ENCODE measurements at regions of chr5 and their contacts with region 1.

Region 1: DNA sequence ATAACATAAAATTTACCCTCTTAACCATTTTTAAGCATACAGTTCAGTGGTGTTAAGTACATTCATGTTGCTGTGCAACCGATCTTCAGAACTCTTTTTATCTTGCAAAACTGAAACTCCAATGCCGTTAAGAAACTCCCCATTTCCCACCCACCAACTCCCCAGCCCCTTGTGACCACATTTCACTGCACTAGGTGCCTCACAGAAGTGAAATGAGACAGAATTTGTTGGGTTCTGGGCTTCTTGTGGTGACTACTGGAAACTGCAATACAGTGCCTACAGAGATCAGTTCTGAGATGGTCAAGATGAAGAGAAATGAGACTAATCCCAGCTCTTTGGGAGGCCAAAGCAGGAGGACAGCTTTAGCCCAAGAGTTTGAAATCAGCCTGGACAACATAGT is 202.1 kb upstream of the SLC30A5 start:
- DNase-seq: peak; percentile 30
- H3K4me3 Mint-ChIP-seq: no peak overlapping the region
- H3K27ac Mint-ChIP-seq: peak overlapping the region; percentile 64
- H3K4me1 Mint-ChIP-seq: peaks cover 30% of the 10 kb centered on the region
- H3K27me3 Mint-ChIP-seq: no peaks in the 10 kb centered on the region

Region 2: GRCh38 chr5:68279984-68280383 is 611.7 kb before region 1 on chr5:
- intact Hi-C with region 1: loop called (anchors 5 kb)
- DNase-seq: peak; percentile 44
- H3K4me3 Mint-ChIP-seq: peak overlapping the region; percentile 76
- H3K27ac Mint-ChIP-seq: peak overlapping the region; percentile 91
- H3K4me1 Mint-ChIP-seq: peaks cover 79% of the 10 kb centered on the region
- H3K27me3 Mint-ChIP-seq: no peaks in the 10 kb centered on the region